Mammary epithelial cell (primary cell): ENCODE measurements at regions of chr3 and their contacts with region 1.

Region 1: DNA sequence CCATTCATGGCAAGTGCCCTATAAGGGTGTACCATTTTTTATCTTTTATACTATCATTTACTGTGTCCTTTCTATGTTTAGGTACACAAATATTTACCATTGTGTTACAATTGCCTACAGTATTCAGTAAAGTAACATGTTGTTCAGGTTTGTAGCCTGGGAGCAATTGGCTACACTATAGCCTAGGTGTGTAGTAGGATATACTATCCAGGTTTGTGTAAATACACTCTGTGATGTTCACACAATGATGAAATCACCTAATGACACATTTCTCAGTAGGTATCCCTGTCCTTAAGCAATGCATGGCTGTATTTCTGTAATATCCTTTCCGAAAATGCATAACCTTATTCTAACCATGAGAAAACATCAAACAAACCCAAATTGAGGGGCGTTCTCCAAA is 17.9 kb upstream of the CNOT10 start:
- DNase-seq: no peak
- H3K4me3 ChIP-seq: no peak overlapping the region
- H3K27ac ChIP-seq: no peak overlapping the region
- H3K4me1 ChIP-seq: no peaks in the 10 kb centered on the region
- H3K27me3 ChIP-seq: no peaks in the 10 kb centered on the region
- CTCF ChIP-seq: no peak

Region 2: DNA sequence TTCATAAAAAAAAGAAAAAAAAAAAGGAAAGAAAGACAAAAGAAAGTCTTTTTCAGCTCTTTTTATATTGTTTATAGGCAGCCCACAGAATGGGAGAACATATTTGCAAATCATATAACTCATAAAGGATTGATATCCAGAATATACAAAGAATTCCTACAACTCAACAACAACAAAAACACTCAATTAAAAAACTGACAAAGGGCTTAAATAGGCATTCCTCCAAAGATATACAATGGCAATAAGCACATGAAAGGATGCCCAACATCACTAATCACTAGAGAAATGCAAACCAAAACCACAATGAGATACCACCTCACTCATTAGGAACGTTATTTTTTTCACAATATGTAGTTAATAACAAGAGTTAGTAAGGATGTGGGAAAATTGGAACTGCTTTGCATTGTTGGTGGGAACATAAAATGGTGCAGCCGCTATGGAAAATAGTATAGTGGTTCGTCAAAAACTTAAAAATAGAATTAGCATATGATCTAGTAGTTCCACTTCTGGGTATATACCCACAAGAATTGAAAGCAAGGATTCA is 482.9 kb before region 1 on chr3:
- CTCF ChIA-PET with region 1: no interaction called
- dilution Hi-C with region 1: no loop called
- in situ Hi-C with region 1: loop called (anchors 10 to 25 kb)
- intact Hi-C with region 1: no loop called
- DNase-seq: peak; percentile 53
- H3K4me3 ChIP-seq: no peak overlapping the region
- H3K27ac ChIP-seq: no peak overlapping the region
- H3K4me1 ChIP-seq: no peaks in the 10 kb centered on the region
- H3K27me3 ChIP-seq: no peaks in the 10 kb centered on the region
- CTCF ChIP-seq: no peak

Region 3: DNA sequence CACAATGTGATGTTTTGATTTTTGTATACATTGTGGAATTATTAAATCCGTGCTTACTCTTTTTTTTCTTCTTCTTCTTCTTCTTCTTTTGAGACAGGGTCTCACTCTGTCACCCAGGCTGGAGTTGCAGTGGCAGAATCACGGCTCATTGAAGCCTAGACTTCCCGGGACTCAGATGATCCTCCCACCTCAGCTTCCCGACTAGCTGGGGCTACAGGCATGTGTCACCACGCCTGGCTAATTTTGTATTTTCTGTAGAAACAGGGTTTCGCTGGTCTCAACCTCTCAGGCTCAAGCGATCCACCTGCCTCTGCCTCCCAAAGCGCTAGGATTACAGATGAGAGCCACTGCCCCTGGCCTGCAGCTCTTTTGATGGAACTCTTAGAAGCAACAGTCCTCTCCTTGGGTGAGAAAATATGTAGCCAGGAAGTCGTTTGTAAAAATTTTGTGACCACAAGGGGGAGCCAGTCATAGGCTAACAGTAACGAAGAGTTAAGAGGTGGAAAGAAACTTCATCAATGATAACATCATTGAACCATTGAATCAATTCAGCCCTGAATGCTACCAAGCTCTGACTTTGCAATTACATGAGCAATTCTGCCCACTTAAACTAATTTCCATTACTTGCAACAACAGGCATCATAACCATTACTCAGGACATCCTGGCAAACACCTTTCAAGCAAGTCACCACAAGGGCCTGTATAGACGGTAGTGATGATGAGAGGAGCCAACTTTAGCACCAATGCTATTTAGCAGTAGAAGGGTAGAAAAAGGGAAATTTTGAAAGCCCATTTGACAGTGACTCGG is 292.1 kb before region 1 on chr3:
- CTCF ChIA-PET with region 1: no interaction called
- dilution Hi-C with region 1: no loop called
- in situ Hi-C with region 1: loop called in 1 of 2 experiments (anchors 25 kb)
- intact Hi-C with region 1: loop called (anchors 1 kb)
- DNase-seq: peak; percentile 66
- H3K4me3 ChIP-seq: no peak overlapping the region
- H3K27ac ChIP-seq: no peak overlapping the region
- H3K4me1 ChIP-seq: peaks cover 10% of the 10 kb centered on the region
- H3K27me3 ChIP-seq: no peaks in the 10 kb centered on the region
- CTCF ChIP-seq: peak; percentile 50 to 68

Region 4: DNA sequence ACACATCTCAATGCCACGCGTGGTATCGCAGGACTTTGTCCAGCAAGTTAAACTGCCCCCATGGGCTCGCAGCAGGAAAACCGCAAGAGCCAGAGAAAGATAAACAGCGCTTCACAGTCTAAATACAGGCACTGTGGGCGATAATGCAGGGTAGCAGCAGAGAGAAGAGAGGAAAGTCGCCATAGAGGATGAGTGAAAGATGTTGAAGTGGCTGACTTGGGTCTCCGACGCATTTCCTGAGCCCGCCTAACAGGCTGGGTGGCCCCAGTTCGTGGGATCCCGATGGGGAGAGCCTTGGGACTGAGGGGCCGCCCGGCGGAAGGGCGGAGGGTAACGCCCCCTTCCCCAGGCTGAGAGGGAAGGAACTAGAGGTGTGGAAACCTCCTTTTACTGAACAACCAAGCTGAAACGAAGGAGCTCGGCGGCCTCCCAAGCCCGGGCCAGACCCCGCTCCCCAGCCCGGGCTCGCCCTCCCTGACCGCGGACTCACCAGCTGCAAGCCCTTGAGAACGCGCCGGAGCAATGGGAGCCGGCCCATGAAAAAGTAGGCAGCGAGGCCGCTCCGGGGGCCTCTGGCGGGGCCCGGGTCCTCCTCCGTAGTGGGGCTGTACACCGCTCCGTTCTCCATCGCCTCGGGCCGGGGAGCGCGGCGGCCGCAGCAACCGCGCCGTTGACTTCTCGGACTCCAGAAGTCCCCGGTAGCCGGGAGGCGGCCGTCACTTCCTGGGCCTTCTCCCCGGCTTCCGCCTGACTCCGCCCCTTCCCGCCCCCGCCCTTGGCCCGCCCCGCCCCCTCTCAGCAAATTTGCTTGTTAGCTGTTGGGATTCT is 164.8 kb before region 1 on chr3 and contains the start of gene CMTM6:
- CTCF ChIA-PET with region 1: no interaction called
- dilution Hi-C with region 1: no loop called
- in situ Hi-C with region 1: loop called (anchors 5 to 10 kb)
- intact Hi-C with region 1: no loop called
- DNase-seq: peak; percentile 72
- H3K4me3 ChIP-seq: peak within 1 kb of the TSS; percentile 71 to 92 (median 76)
- H3K27ac ChIP-seq: peak within 1 kb of the TSS; percentile 77
- H3K4me1 ChIP-seq: peaks cover 3% of the 10 kb centered on the region
- H3K27me3 ChIP-seq: no peaks in the 10 kb centered on the region
- CTCF ChIP-seq: peak in 1 of 2 donors; percentile 4
- total RNA-seq, gene CMTM6: 70.0 to 174 TPM

Region 5: GRCh38 chr3:32510075-32510724 is 156.9 kb before region 1 on chr3:
- CTCF ChIA-PET with region 1: no interaction called
- dilution Hi-C with region 1: no loop called
- in situ Hi-C with region 1: loop called (anchors 5 to 10 kb)
- intact Hi-C with region 1: loop called (anchors 1 kb)
- DNase-seq: peak; percentile 52
- H3K4me3 ChIP-seq: no peak overlapping the region
- H3K27ac ChIP-seq: no peak overlapping the region
- H3K4me1 ChIP-seq: no peaks in the 10 kb centered on the region
- H3K27me3 ChIP-seq: no peaks in the 10 kb centered on the region
- CTCF ChIP-seq: peak; percentile 63 to 79

Region 6: DNA sequence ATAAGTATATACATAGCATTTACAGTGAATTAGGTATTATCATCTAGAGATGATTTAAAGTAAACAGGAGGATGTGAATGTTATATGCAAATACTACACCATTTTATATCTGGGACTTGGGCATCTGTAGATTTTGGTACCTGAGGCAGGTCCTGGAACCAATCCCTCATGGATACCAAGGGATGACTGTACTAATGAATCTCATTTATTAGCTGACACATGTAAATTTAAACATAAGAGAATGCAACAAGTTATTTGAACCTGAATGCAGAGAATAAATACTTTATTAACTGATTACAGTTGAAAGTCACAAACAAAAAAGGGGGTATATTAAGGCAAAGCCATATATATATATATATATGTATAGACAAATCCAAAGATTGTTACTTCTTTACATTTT is 141.4 kb before region 1 on chr3:
- CTCF ChIA-PET with region 1: no interaction called
- dilution Hi-C with region 1: loop called (anchors 5 kb)
- in situ Hi-C with region 1: no loop called
- intact Hi-C with region 1: no loop called
- DNase-seq: no peak
- H3K4me3 ChIP-seq: no peak overlapping the region
- H3K27ac ChIP-seq: no peak overlapping the region
- H3K4me1 ChIP-seq: no peaks in the 10 kb centered on the region
- H3K27me3 ChIP-seq: no peaks in the 10 kb centered on the region
- CTCF ChIP-seq: no peak

Region 7: GRCh38 chr3:32584660-32585059 is 82.5 kb before region 1 on chr3:
- CTCF ChIA-PET with region 1: no interaction called
- dilution Hi-C with region 1: loop called (anchors 5 kb)
- in situ Hi-C with region 1: no loop called
- intact Hi-C with region 1: no loop called
- DNase-seq: no peak
- H3K4me3 ChIP-seq: no peak overlapping the region
- H3K27ac ChIP-seq: no peak overlapping the region
- H3K4me1 ChIP-seq: no peaks in the 10 kb centered on the region
- H3K27me3 ChIP-seq: peaks cover 2% of the 10 kb centered on the region
- CTCF ChIP-seq: no peak

Region 8: GRCh38 chr3:33035596-33035995 is 368.5 kb after region 1 on chr3:
- CTCF ChIA-PET with region 1: no interaction called
- dilution Hi-C with region 1: no loop called
- in situ Hi-C with region 1: no loop called
- intact Hi-C with region 1: no loop called
- DNase-seq: peak; percentile 38
- H3K4me3 ChIP-seq: no peak overlapping the region
- H3K27ac ChIP-seq: peak overlapping the region; percentile 20
- H3K4me1 ChIP-seq: peaks cover 35% of the 10 kb centered on the region
- H3K27me3 ChIP-seq: no peaks in the 10 kb centered on the region
- CTCF ChIP-seq: no peak